ENCODE measurements at regions of chr7 and their contacts with region 1.

Region 1: DNA sequence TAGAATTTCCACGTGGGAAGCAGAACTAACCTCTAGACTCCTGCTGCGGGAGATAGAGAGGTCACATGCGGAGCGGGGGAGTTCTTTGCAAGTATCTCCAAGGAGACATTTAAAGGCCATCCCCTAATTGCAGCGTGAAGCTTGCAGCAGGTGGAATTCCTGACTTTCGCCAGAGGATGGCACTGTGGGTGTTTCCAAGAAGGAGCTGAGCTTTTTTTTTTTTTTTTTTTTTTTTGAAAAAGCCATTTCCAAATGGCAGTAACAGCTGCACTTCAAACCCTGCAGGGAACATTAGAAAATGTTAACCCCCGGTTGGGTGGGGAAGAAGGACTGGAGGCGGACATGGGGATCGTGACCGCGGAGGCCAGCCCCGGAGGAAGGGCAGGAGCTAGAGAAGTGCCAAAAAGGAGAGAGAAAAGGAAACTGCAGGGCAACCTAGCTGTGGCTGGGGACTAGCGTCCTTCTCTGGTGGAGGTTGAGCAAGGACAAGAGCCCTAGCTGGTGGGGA is 487.7 kb downstream of the TYW1 start:
- DNase-seq: peak; percentile 77
- H3K4me3 ChIP-seq: peak overlapping the region; percentile 22 to 37; a peak in 3 of 4 replicates
- H3K27ac ChIP-seq: 0 out of 4 replicates have a peak overlapping the region, but pooled peaks of 1 of the 2 experiments have one; percentile 14
- H3K4me1 ChIP-seq: peaks cover 0 to 4% of the 10 kb centered on the region in 2 experiments; a peak in 1 of 4 replicates
- H3K27me3 ChIP-seq: no peaks in the 10 kb centered on the region
- CTCF ChIP-seq: peak; percentile 82
- EP300 ChIP-seq: peak in 1 of 2 experiments; percentile 76; a peak in 2 of 4 replicates
- RAD21 ChIP-seq: peak; percentile 96

Region 2: DNA sequence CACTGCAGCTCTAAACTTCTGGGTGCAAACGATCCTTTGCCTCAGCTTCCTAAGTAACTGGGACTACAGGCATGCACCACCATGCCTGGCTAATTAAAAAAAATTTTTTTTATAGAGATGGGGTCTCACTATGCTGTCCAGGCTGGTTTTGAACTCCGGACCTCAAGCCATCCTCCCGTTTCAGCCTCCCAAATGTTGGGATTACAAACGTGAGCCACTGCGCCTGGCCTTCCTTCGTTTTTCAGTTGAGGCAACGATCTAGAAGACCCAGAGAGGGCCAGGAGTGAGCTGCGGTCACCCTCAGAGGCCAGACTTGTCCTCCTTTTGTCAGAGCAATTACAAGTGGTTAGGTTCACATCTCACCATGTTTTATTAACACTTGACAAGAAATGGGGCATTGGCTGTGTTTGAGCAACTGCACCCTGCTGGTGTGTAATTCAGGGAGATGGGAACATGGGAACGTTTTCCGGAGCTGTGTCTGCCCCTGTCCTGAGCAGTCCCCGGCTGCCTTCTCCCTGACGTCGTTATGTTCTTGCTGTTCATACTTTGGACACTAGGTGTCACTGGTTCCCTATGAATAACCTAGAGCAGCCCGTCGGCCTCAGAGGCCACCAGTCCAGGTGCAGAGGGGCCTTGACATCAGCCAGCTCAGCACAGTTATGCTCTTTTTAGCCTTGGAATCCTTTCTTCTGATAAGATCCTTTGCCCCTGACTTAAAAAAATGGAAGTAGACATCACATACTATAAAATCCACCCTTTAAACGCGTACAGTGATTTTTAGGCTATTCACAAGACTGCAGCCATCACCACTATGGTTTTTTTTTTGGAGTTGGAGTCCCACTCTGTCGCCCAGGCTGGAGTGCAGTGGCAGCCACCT is 112.6 kb before region 1 on chr7:
- CTCF ChIA-PET with region 1: interaction called, 19 read pairs
- POLR2A ChIA-PET with region 1: no interaction called
- DNase-seq: peak; percentile 92
- H3K4me3 ChIP-seq: no peak overlapping the region
- H3K27ac ChIP-seq: no peak overlapping the region
- H3K4me1 ChIP-seq: no peaks in the 10 kb centered on the region
- H3K27me3 ChIP-seq: no peaks in the 10 kb centered on the region
- CTCF ChIP-seq: peak; percentile 94
- EP300 ChIP-seq: no peak
- RAD21 ChIP-seq: peak; percentile 98

Region 3: DNA sequence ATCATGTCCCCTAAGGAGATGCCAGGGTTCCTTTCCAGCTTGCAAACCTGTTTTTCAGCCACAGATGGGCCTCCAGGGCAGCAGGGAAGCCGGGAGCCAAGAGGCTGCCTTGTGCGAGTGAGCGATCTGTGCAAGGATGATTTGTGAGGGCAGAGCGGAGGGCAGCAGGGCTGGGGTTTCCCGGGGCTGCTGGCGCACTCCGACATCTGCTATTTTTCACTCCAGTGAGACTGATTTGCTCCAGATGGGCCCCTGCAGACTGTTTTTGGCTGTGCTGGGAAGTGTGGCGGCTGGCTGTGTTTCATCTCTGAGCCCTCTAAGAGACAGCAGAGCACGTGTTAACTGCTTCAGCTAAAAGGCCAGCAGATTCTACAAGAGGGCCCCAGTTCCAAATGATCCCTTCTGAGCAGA is 21.5 kb before region 1 on chr7:
- CTCF ChIA-PET with region 1: interaction called, 23 read pairs
- POLR2A ChIA-PET with region 1: interaction called, 8 read pairs
- DNase-seq: peak; percentile 88
- H3K4me3 ChIP-seq: no peak overlapping the region
- H3K27ac ChIP-seq: peak overlapping the region in 1 of 2 experiments; percentile 97; a peak in 2 of 4 replicates
- H3K4me1 ChIP-seq: peaks cover 0 to 21% of the 10 kb centered on the region in 2 experiments; a peak in 2 of 4 replicates
- H3K27me3 ChIP-seq: no peaks in the 10 kb centered on the region
- CTCF ChIP-seq: no peak
- EP300 ChIP-seq: peak in 1 of 2 experiments; percentile 97; a peak in 2 of 4 replicates
- RAD21 ChIP-seq: peak; percentile 43; the same call in 1 of the 2 replicates

Region 4: DNA sequence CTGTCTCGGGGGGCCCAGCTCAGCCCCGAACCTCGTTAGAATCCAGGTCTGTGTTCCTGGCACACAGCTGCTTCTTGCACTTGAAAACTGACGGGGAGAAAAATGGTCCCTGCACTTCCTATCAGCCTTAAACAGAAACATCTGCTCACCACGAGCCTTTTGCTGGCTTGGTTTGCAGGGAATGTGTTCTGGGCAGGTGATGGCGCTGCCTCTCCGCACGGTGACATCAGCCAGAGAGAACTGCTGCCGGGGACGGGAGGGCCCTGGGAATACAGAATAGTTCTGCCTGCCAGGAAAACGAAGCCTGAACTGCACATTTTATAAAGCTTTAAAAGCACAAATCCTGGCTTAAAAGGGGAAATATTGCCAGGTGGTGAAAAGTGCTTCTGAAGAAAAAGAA is 134.9 kb after region 1 on chr7:
- CTCF ChIA-PET with region 1: interaction called, 13 read pairs
- POLR2A ChIA-PET with region 1: interaction called, 3 read pairs
- DNase-seq: peak; percentile 79
- H3K4me3 ChIP-seq: no peak overlapping the region
- H3K27ac ChIP-seq: peak overlapping the region in 1 of 2 experiments; percentile 89; a peak in 2 of 4 replicates
- H3K4me1 ChIP-seq: peaks cover 0 to 23% of the 10 kb centered on the region in 2 experiments; a peak in 2 of 4 replicates
- H3K27me3 ChIP-seq: no peaks in the 10 kb centered on the region; the same call in 1 of the 2 replicates
- CTCF ChIP-seq: no peak
- EP300 ChIP-seq: peak in 1 of 2 experiments; percentile 68; a peak in 1 of 4 replicates
- RAD21 ChIP-seq: peak; percentile 75

Region 5: GRCh38 chr7:67788669-67789068 is 304.4 kb after region 1 on chr7:
- CTCF ChIA-PET with region 1: interaction called, 12 read pairs
- POLR2A ChIA-PET with region 1: no interaction called
- DNase-seq: peak; percentile 77
- H3K4me3 ChIP-seq: peak overlapping the region in 1 of 2 experiments; percentile 45; a peak in 1 of 4 replicates
- H3K27ac ChIP-seq: no peak overlapping the region
- H3K4me1 ChIP-seq: peaks cover 0 to 9% of the 10 kb centered on the region in 2 experiments; a peak in 1 of 4 replicates
- H3K27me3 ChIP-seq: no peaks in the 10 kb centered on the region
- CTCF ChIP-seq: peak; percentile 37
- EP300 ChIP-seq: peak in 1 of 2 experiments; percentile 22; a peak in 1 of 4 replicates
- RAD21 ChIP-seq: peak; percentile 95

Region 6: GRCh38 chr7:67962863-67963262 is 478.6 kb after region 1 on chr7:
- CTCF ChIA-PET with region 1: no interaction called
- POLR2A ChIA-PET with region 1: no interaction called
- DNase-seq: no peak
- H3K4me3 ChIP-seq: no peak overlapping the region
- H3K27ac ChIP-seq: no peak overlapping the region
- H3K4me1 ChIP-seq: no peaks in the 10 kb centered on the region
- H3K27me3 ChIP-seq: no peaks in the 10 kb centered on the region
- CTCF ChIP-seq: no peak
- EP300 ChIP-seq: no peak
- RAD21 ChIP-seq: no peak

Measured in SK-N-SH (cell line).